CD14-positive monocyte (primary cell): ENCODE measurements at regions of chr1 and their contacts with region 1.

Region 1: DNA sequence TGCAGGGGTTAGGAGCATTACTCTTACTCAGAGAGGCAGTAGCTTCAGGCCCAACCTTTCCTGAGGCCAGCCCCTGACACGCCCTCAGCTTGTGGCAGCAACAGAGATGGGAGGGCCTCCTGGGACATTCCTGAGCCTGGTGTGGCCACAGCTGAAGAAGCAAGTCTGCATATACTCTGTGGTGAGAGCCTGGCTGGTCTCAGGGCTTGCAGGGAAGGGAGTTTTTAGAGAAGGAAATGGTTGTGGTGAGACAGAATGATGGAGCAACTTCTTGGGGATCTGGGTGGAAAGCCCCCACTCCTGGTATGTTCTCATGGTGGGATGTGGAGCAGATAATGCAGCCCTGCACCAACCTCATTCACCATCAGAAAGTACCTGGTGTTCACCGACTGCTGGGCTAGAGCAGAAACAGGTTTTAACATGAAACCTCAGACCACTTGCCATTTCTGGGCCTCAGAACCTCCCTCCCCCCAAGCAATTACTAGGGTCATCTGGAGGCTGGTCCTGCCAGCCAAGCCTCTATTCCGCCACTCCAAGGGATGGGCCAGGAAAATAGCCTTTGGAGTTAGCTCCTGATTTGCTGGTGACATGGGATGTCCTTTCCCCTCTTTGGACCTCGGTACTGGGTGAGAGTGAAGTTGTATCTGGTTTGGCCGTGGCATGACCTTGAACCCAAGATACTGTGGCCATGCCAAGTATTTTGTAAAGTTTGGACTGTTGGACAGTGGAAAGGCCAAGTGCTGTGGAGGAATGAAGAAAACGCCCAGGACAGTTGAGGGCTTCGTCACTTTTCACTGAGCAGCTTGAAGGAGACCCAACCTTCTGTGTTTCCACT is 28.1 kb upstream of the RNF19B start:
- DNase-seq: peak; percentile 96 to 99 (median 97)
- H3K4me3 ChIP-seq: peak overlapping the region in 1 of 3 experiments; percentile 48
- H3K4me3 Mint-ChIP-seq: peak overlapping the region; percentile 53 to 77
- H3K27ac ChIP-seq: peak overlapping the region; percentile 97 to 100
- H3K27ac Mint-ChIP-seq: peak overlapping the region; percentile 99 to 100 (median 100)
- H3K4me1 ChIP-seq: peaks cover 97 to 100% of the 10 kb centered on the region in 2 donors
- H3K4me1 Mint-ChIP-seq: peaks cover 95% of the 10 kb centered on the region
- H3K27me3 ChIP-seq: no peaks in the 10 kb centered on the region
- H3K27me3 Mint-ChIP-seq: peaks cover 0 to 9% (median 2%) of the 10 kb centered on the region in 3 donors
- CTCF ChIP-seq: no peak

Region 2: DNA sequence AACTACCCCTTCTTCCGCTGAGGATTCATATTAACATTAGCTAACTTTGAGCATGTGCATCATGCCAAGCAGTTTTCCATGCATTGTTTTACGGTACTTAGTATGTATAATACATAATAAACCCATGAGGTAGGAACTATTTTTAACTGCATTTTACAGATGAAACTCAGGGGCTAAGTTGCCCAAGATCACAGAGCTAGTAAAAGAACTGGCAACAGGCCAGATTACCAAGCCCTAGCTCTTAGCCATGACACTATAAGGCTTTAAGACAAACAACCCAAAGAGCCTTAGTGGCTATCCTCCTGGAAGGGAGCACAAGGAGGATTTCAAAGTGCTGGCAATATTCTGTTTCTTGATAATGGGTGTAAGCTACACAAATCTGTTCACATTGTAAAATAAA is 37.9 kb after region 1 on chr1:
- intact Hi-C with region 1: loop called in 1 of 2 experiments (anchors 5 kb)
- DNase-seq: peak; percentile 42 to 74 (median 43)
- H3K4me3 ChIP-seq: peak overlapping the region in 1 of 3 experiments; percentile 49
- H3K4me3 Mint-ChIP-seq: no peak overlapping the region
- H3K27ac ChIP-seq: peak overlapping the region in 1 of 2 donors; percentile 83
- H3K27ac Mint-ChIP-seq: peak overlapping the region; percentile 80 to 97 (median 93)
- H3K4me1 ChIP-seq: peaks cover 57 to 61% of the 10 kb centered on the region in 2 donors
- H3K4me1 Mint-ChIP-seq: peaks cover 71% of the 10 kb centered on the region
- H3K27me3 ChIP-seq: no peaks in the 10 kb centered on the region
- H3K27me3 Mint-ChIP-seq: no peaks in the 10 kb centered on the region
- CTCF ChIP-seq: no peak